ENCODE measurements at regions of chr11 and their contacts with region 1.

Region 1: DNA sequence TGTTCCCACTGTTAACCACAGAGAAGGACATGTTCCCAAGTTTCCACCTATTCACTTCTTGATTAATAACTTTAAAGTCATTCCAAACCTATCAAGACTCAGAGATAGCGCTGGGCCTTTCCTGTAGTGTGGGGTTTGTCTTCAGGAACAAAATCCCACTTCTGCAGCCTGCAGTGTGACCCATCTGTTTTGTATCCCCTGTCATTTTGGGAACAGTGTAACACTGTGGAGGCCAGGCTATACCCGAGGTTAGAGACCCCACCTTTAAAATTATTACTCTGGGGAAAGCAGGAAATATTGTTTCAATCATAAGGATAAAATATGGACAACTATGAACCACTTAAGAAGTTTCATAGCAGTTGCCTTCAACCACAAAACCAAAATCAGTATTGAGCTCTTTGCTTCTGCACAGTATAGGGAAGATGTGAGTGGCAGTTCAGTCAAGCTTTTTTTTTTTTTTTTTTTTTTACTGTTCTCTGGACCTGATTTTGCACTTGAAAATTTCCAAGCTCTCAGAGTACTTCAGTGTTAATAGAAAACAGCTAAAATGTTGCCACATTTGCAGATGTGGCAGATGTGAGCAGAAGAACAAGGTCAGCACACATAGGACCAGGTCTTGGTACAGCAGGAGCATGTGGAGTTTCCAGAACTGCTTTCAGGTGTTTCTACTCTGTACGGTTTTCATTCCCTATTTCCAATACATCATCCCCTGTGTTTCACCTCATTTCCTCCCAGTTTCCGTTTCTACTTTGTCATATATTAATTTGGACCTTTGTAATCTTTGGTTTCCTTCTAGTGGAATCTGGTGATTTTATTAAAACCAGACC is 121.5 kb downstream of the MAML2 start:
- DNase-seq: no peak
- ATAC-seq: peak; percentile 21 to 57 (median 46)
- H3K4me3 ChIP-seq: no peak overlapping the region
- H3K4me3 Mint-ChIP-seq: peak overlapping the region; percentile 11 to 52 (median 36)
- H3K27ac ChIP-seq: peak overlapping the region; percentile 90
- H3K27ac Mint-ChIP-seq: peak overlapping the region; percentile 89 to 91
- H3K4me1 ChIP-seq: peaks cover 47 to 57% of the 10 kb centered on the region in 2 experiments
- H3K4me1 Mint-ChIP-seq: peaks cover 82 to 92% (median 85%) of the 10 kb centered on the region in 3 donors
- H3K27me3 ChIP-seq: no peaks in the 10 kb centered on the region
- H3K27me3 Mint-ChIP-seq: no peaks in the 10 kb centered on the region

Region 2: DNA sequence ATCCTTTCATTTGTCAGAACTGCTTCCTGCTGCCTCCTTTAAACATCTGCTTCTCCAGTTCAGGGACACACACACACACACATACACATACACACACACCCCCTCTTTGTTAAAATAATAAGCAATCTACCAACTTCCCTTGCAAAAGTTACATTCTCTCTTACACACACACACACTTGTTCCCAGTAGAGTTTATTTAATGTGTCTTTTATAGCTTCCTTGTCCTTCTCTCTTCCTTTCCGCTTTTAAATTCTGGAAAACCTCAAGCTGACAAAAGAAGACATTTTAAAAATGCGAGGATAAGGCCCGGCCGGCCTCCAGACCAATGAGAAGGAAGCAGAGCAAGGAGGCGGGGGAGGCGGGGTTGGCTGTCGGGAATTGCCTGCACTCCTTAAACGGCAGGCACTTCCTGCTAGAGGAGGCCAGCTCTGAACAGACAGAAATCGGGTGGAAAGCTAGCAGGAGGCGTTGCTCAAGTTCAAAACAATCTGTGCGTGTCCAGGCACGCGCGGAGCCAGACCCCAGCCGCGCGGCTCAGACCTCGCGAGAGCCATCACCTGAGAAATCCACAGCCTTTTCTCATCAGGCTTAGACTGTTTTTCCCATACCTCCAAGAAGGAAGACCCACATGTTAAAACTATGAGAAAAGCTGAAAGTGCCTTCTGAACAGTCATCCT is 21.7 kb after region 1 on chr11:
- CTCF ChIA-PET with region 1: interaction called in 1 of 2 experiments, 3 read pairs
- POLR2A ChIA-PET with region 1: interaction called, 6 to 10 read pairs
- DNase-seq: peak; percentile 24 to 81 (median 68)
- ATAC-seq: peak; percentile 70 to 92 (median 81)
- H3K4me3 ChIP-seq: peak overlapping the region; percentile 45 to 50
- H3K4me3 Mint-ChIP-seq: peak overlapping the region; percentile 79 to 86 (median 85)
- H3K27ac ChIP-seq: peak overlapping the region; percentile 55
- H3K27ac Mint-ChIP-seq: peak overlapping the region; percentile 80 to 98
- H3K4me1 ChIP-seq: peaks cover 31 to 37% of the 10 kb centered on the region in 2 experiments
- H3K4me1 Mint-ChIP-seq: peaks cover 60 to 66% (median 61%) of the 10 kb centered on the region in 3 donors
- H3K27me3 ChIP-seq: no peaks in the 10 kb centered on the region
- H3K27me3 Mint-ChIP-seq: no peaks in the 10 kb centered on the region

Region 3: DNA sequence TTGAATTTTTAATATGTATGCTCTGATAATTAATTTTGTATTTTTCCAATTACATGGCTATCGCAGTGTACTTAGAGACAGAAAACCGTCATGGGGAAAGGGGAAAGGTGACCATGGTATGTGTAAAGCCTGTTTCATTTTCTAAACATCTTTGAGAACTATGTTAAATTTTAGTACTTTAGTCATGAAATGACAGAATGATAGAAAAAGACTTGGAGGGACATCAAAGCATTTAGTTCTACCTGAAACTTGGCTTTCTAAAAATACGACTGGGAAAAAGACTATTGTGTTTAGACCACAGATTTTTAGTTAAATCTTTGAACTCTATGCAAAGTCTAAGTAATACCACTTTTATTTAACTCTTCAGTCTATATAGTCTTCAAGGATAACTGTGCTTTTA is 67.5 kb after region 1 on chr11:
- CTCF ChIA-PET with region 1: interaction called in 1 of 2 experiments, 10 read pairs
- POLR2A ChIA-PET with region 1: interaction called in 1 of 2 experiments, 3 read pairs
- DNase-seq: no peak
- ATAC-seq: no peak
- H3K4me3 ChIP-seq: no peak overlapping the region
- H3K4me3 Mint-ChIP-seq: no peak overlapping the region
- H3K27ac ChIP-seq: no peak overlapping the region
- H3K27ac Mint-ChIP-seq: no peak overlapping the region
- H3K4me1 ChIP-seq: peaks cover 3 to 32% of the 10 kb centered on the region in 2 experiments
- H3K4me1 Mint-ChIP-seq: peaks cover 80 to 83% (median 81%) of the 10 kb centered on the region in 3 donors
- H3K27me3 ChIP-seq: no peaks in the 10 kb centered on the region
- H3K27me3 Mint-ChIP-seq: no peaks in the 10 kb centered on the region

Region 4: DNA sequence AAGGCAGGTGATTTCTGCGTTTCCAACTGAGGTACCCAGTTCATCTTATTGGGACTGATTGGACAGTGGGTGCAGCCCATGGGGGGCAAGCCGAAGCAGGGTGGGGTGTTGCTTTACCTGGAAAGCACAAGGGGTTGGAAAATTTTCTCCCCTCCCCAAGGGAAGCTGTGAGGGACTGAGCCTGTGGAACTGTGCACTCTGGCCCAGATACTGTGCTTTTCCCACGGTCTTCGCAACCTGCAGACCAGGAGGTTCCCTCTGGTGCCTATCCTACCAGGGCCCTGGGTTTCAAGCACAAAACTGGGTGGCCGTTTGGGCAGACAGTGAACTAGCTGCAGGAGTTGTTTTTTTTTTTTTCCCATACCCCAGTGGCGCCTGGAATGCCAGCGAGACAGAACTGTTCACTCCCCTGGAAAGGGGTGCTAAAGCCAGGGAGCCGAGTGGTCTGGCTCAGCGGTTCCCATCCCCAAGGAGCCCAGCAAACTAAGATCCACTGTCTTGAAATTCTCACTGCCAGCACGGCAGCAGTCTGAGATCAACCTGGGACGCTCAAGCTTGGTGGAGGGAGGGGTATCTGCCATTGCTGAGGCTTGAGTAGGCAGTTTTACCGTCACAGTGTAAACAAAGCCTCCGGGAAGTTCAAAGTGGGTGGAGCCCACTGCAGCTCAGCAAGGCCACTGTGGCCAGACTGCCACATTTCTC is 265.6 kb after region 1 on chr11:
- CTCF ChIA-PET with region 1: no interaction called
- POLR2A ChIA-PET with region 1: no interaction called
- DNase-seq: no peak
- ATAC-seq: no peak
- H3K4me3 ChIP-seq: no peak overlapping the region
- H3K4me3 Mint-ChIP-seq: no peak overlapping the region
- H3K27ac ChIP-seq: no peak overlapping the region
- H3K27ac Mint-ChIP-seq: no peak overlapping the region
- H3K4me1 ChIP-seq: no peaks in the 10 kb centered on the region
- H3K4me1 Mint-ChIP-seq: no peaks in the 10 kb centered on the region
- H3K27me3 ChIP-seq: peaks cover 0 to 17% of the 10 kb centered on the region in 2 experiments
- H3K27me3 Mint-ChIP-seq: peaks cover 37 to 41% of the 10 kb centered on the region in 2 donors

Region 5: DNA sequence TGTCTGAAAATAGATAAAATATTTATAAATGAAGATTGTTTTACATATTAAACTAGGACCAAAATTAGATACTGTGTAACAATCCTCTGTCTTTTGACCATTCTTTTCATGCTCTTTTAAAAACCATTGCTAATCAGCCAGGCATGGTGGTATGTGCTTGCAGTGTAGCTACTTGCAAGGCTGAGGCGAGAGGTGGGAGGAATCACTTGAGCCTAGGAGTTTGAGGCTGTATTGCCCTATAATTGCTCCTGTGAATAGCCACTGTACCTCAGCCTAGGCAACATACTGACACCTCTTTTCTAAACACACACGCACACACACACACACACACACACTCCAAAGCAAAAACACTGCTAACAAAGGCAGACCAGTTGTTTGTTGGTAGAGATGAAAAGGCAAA is 427.5 kb after region 1 on chr11:
- CTCF ChIA-PET with region 1: no interaction called
- POLR2A ChIA-PET with region 1: no interaction called
- DNase-seq: no peak
- ATAC-seq: no peak
- H3K4me3 ChIP-seq: no peak overlapping the region
- H3K4me3 Mint-ChIP-seq: no peak overlapping the region
- H3K27ac ChIP-seq: no peak overlapping the region
- H3K27ac Mint-ChIP-seq: no peak overlapping the region
- H3K4me1 ChIP-seq: no peaks in the 10 kb centered on the region
- H3K4me1 Mint-ChIP-seq: no peaks in the 10 kb centered on the region
- H3K27me3 ChIP-seq: no peaks in the 10 kb centered on the region
- H3K27me3 Mint-ChIP-seq: peaks cover 0 to 3% of the 10 kb centered on the region in 2 donors